CD8-positive, alpha-beta T cell (primary cell): ENCODE measurements at regions of chr12 and their contacts with region 1.

Region 1: GRCh38 chr12:14948672-14949071 is 10.3 kb upstream of the ERP27 start:
- DNase-seq: peak in 7 of 9 experiments; percentile 38 to 91 (median 65)
- ATAC-seq: peak; percentile 86
- H3K4me3 ChIP-seq: peak overlapping the region; percentile 27 to 48
- H3K4me3 Mint-ChIP-seq: peak overlapping the region; percentile 78
- H3K27ac ChIP-seq: peak overlapping the region; percentile 36 to 96
- H3K27ac Mint-ChIP-seq: peak overlapping the region; percentile 94
- H3K4me1 ChIP-seq: peaks cover 91% of the 10 kb centered on the region
- H3K4me1 Mint-ChIP-seq: peaks cover 93% of the 10 kb centered on the region
- H3K27me3 ChIP-seq: no peaks in the 10 kb centered on the region
- H3K27me3 Mint-ChIP-seq: no peaks in the 10 kb centered on the region
- CTCF ChIP-seq: no peak

Region 2: DNA sequence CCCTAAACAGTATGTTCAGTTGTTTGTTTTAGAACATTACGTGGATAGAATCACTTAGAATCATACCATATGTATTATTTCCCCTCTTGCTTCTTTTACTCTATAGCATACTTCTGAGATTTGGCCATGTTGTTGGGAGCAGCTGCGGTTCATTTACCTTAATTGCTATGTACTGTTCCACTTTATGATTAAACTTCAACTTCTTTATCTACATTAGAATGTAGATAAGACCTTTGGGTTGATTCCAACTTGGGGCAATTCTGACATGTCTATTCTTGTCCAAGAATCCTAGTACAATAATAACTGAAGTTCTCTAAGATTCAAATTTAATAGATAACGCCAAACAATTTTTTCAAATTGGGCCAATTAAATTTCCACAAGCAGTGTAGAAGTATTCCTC is 1048.0 kb before region 1 on chr12:
- CTCF ChIA-PET with region 1: no interaction called
- POLR2A ChIA-PET with region 1: no interaction called
- intact Hi-C with region 1: no loop called
- DNase-seq: no peak
- ATAC-seq: no peak
- H3K4me3 ChIP-seq: no peak overlapping the region
- H3K4me3 Mint-ChIP-seq: no peak overlapping the region
- H3K27ac ChIP-seq: no peak overlapping the region
- H3K27ac Mint-ChIP-seq: no peak overlapping the region
- H3K4me1 ChIP-seq: no peaks in the 10 kb centered on the region
- H3K4me1 Mint-ChIP-seq: no peaks in the 10 kb centered on the region
- H3K27me3 ChIP-seq: no peaks in the 10 kb centered on the region
- H3K27me3 Mint-ChIP-seq: no peaks in the 10 kb centered on the region
- CTCF ChIP-seq: no peak

Region 3: DNA sequence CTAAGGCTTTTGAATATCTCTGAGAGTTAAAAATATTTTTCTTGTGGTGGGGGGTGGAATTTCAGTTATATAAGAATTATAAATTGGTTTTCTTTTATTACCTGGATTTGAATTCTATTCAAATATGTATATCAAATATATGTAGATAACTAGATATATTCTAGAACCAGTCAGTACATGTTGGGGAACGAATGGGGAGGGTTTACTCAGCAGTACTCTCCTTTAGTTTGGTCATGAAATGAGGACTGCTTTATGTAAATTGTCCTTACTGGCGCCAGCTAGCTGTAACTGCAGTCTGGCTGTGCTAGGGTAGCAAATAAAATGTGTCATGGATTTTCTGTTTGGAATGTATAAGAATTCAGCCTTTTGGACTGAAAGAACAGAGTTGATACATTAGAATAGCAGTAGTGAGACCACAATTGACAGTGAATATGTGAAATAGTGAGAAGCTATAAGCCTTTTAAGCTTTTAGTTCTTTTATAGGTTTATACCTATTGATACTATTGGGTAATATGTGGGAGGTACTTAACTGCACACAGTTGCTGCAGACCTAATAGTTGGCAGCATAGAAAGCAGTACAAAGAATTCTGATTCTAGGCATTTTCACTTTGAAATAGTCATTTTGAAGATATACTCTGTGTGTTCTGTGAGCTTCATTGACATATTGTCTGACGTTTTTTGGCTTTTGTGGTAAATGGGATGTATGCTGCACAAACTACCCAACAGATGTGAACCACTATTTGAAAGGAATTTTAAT is 554.2 kb before region 1 on chr12:
- CTCF ChIA-PET with region 1: no interaction called
- POLR2A ChIA-PET with region 1: no interaction called
- intact Hi-C with region 1: loop called (anchors 10 kb)
- DNase-seq: peak in 5 of 9 experiments; percentile 35 to 89 (median 52)
- ATAC-seq: peak; percentile 61
- H3K4me3 ChIP-seq: peak overlapping the region in 1 of 2 experiments; percentile 19
- H3K4me3 Mint-ChIP-seq: peak overlapping the region; percentile 67
- H3K27ac ChIP-seq: peak overlapping the region; percentile 39 to 75
- H3K27ac Mint-ChIP-seq: peak overlapping the region; percentile 84
- H3K4me1 ChIP-seq: peaks cover 90% of the 10 kb centered on the region
- H3K4me1 Mint-ChIP-seq: peaks cover 83% of the 10 kb centered on the region
- H3K27me3 ChIP-seq: no peaks in the 10 kb centered on the region
- H3K27me3 Mint-ChIP-seq: no peaks in the 10 kb centered on the region
- CTCF ChIP-seq: no peak

Region 4: DNA sequence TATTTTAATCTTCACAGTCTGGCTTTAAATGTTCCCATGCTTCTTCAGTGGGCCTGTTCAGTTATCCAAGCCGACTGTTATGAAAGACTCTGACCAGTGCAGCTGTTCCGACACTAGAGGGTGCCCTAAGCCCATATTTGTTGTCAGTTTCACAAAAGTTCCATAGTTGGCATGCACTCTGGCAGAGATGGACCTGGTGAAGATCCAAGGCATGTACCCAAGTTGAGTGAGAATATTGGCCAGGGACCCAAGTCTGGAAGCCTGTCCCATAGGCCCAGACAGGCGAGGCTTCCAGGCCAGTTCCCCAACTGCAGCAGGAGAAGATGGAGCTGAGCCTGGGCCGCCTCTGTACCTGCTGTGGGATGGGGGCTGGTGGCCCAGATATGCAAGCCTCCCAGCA is 224.9 kb before region 1 on chr12:
- CTCF ChIA-PET with region 1: no interaction called
- POLR2A ChIA-PET with region 1: no interaction called
- intact Hi-C with region 1: no loop called
- DNase-seq: peak; percentile 10 to 79 (median 56)
- ATAC-seq: peak; percentile 80
- H3K4me3 ChIP-seq: no peak overlapping the region
- H3K4me3 Mint-ChIP-seq: no peak overlapping the region
- H3K27ac ChIP-seq: no peak overlapping the region
- H3K27ac Mint-ChIP-seq: no peak overlapping the region
- H3K4me1 ChIP-seq: no peaks in the 10 kb centered on the region
- H3K4me1 Mint-ChIP-seq: no peaks in the 10 kb centered on the region
- H3K27me3 ChIP-seq: peaks cover 0 to 2% of the 10 kb centered on the region in 2 experiments
- H3K27me3 Mint-ChIP-seq: peaks cover 12% of the 10 kb centered on the region
- CTCF ChIP-seq: peak; percentile 77

Region 5: DNA sequence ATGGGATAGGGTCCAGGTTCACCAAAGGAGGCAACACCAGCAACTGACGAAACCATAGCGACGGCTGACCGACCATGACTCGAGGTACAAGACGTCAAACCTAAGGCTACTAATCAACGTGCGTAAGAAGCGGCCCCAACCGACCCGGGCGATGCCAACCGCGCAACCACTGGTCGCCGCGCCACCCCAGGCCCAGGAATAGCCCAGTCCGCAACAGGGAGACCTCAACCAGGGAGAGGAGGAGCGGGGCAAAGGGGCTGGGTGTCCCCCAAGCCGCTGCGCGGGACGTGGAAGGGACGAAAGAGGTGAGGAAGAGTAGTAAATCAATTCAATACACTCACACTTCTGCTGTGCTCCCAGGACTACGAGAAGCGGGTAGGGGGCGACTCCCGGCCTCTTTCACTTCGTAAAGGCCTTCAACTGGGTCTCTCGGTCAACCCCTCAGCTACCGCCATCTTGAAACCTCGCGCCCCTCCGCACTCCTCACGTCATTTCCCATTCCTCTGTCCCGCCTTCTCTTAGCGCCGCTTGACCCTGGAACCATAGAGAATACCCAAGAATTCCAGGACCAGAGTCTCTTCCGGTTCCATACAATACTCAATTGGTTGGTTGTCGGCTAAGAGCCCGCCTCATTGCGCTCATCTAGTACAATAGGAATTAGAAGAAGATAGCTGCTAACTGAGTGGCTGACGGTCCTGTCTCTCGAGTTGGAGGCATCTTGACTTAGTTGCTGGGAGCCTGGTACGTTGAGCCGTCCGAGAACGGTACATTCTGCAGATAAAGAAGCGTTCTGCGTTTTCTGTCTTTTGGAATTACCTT is 145.5 kb before region 1 on chr12 and contains the starts of genes C12orf60 and WBP11:
- CTCF ChIA-PET with region 1: no interaction called
- POLR2A ChIA-PET with region 1: no interaction called
- intact Hi-C with region 1: loop called in 1 of 2 experiments (anchors 5 kb)
- DNase-seq: peak; percentile 76 to 98 (median 87)
- ATAC-seq: peak; percentile 94
- H3K4me3 ChIP-seq: peak within 1 kb of the TSS; percentile 86 to 95
- H3K4me3 Mint-ChIP-seq: no peak within 1 kb of the TSS
- H3K27ac ChIP-seq: peak within 1 kb of the TSS; percentile 91 to 98
- H3K27ac Mint-ChIP-seq: no peak within 1 kb of the TSS
- H3K4me1 ChIP-seq: peaks cover 28% of the 10 kb centered on the region
- H3K4me1 Mint-ChIP-seq: peaks cover 12% of the 10 kb centered on the region
- H3K27me3 ChIP-seq: no peaks in the 10 kb centered on the region
- H3K27me3 Mint-ChIP-seq: no peaks in the 10 kb centered on the region
- CTCF ChIP-seq: no peak
- total RNA-seq, gene C12orf60: 0.14 TPM in 1 of 2 experiments, not detected in the other
- total RNA-seq, gene WBP11: 171 to 184 TPM

Region 6: DNA sequence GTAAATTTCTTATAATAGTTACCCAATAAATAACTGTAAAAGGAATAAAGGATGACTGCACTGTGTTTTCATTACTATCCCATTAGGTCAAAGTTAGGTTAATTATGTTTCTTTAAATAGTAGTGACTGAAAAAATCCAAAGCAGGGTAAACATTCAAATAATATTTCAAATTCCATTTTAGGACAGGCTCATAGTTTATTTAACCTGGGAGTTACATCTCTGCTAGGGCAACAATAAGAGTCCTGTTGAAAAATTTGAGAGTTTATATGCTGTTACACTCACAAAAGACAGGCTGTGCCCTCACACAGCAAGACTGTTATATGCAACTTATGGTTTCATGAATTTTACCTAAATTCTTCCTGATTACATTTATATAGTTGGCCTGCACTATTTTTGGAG is 18.4 kb before region 1 on chr12:
- CTCF ChIA-PET with region 1: no interaction called
- POLR2A ChIA-PET with region 1: interaction called, 5 read pairs
- intact Hi-C with region 1: loop called in 1 of 2 experiments (anchors 2 kb)
- DNase-seq: no peak
- ATAC-seq: no peak
- H3K4me3 ChIP-seq: no peak overlapping the region
- H3K4me3 Mint-ChIP-seq: no peak overlapping the region
- H3K27ac ChIP-seq: no peak overlapping the region
- H3K27ac Mint-ChIP-seq: no peak overlapping the region
- H3K4me1 ChIP-seq: peaks cover 2% of the 10 kb centered on the region
- H3K4me1 Mint-ChIP-seq: peaks cover 21% of the 10 kb centered on the region
- H3K27me3 ChIP-seq: no peaks in the 10 kb centered on the region
- H3K27me3 Mint-ChIP-seq: no peaks in the 10 kb centered on the region
- CTCF ChIP-seq: no peak

Region 7: DNA sequence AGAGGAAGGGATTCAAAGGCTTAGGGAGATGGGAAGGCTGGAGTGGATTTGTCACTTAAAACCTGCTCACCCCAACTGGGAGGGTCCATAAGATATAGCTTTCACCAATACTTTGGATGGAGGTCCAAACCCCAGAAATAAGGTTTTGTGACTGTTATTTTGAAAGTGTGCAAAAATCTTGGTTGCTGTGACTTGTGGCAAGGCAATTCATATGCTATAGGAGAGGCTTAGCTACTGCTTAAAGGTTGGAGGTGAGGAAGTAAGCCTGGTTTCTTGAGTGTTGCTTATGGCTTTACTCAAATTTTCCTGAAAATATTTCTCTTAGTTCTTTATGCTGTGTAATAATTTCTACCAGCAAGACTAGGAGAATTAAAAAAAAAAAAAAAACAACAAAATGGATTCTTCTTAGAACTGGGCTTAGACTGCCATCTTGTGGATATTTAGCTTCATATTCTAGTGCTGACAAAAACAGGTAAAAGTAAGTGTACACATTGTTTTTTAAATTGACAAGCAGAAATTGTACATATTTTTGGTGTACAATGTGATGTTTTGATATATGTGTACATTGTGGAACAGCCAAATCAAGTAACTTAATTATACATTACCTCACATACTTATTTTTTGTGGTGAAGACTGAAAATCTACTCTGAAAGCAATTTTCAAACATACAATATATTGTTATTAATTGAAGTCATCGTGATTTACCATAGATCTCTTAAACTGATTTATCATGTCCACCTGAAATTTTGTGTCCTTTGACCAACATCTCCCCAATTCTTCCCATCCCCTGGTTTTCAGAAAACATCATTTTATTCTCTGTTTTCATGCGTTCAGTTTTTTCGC is 47.1 kb after region 1 on chr12:
- CTCF ChIA-PET with region 1: interaction called, 11 read pairs
- POLR2A ChIA-PET with region 1: interaction called, 5 read pairs
- intact Hi-C with region 1: loop called in 1 of 2 experiments (anchors 5 kb)
- DNase-seq: peak in 2 of 9 experiments; percentile 78 to 85
- ATAC-seq: peak; percentile 70
- H3K4me3 ChIP-seq: no peak overlapping the region
- H3K4me3 Mint-ChIP-seq: peak overlapping the region; percentile 20
- H3K27ac ChIP-seq: no peak overlapping the region
- H3K27ac Mint-ChIP-seq: peak overlapping the region; percentile 63
- H3K4me1 ChIP-seq: peaks cover 29% of the 10 kb centered on the region
- H3K4me1 Mint-ChIP-seq: peaks cover 31% of the 10 kb centered on the region
- H3K27me3 ChIP-seq: no peaks in the 10 kb centered on the region
- H3K27me3 Mint-ChIP-seq: peaks cover 2% of the 10 kb centered on the region
- CTCF ChIP-seq: peak; percentile 75